ENCODE measurements at regions of chr6 and their contacts with region 1.

Region 1: GRCh38 chr6:30600451-30600961 is 16.5 kb downstream of the PPP1R10 start:
- DNase-seq: no peak
- ATAC-seq: no peak
- H3K4me3 ChIP-seq: no peak overlapping the region
- H3K27ac ChIP-seq: no peak overlapping the region
- H3K4me1 ChIP-seq: no peaks in the 10 kb centered on the region
- H3K27me3 ChIP-seq: no peaks in the 10 kb centered on the region
- CTCF ChIP-seq: no peak

Region 2: GRCh38 chr6:30396833-30397479 is 203.6 kb before region 1 on chr6:
- CTCF ChIA-PET with region 1: no interaction called
- POLR2A ChIA-PET with region 1: no interaction called
- intact Hi-C with region 1: no loop called
- DNase-seq: peak; percentile 83
- ATAC-seq: peak; percentile 85
- H3K4me3 ChIP-seq: no peak overlapping the region
- H3K27ac ChIP-seq: no peak overlapping the region
- H3K4me1 ChIP-seq: peaks cover 5% of the 10 kb centered on the region; the same call in 1 of the 2 replicates
- H3K27me3 ChIP-seq: peaks cover 30% of the 10 kb centered on the region
- CTCF ChIP-seq: peak; percentile 92

Region 3: GRCh38 chr6:30418448-30418847 is 182.1 kb before region 1 on chr6:
- CTCF ChIA-PET with region 1: no interaction called
- POLR2A ChIA-PET with region 1: no interaction called
- intact Hi-C with region 1: no loop called
- DNase-seq: no peak
- ATAC-seq: no peak
- H3K4me3 ChIP-seq: no peak overlapping the region
- H3K27ac ChIP-seq: no peak overlapping the region
- H3K4me1 ChIP-seq: no peaks in the 10 kb centered on the region
- H3K27me3 ChIP-seq: peaks cover 54% of the 10 kb centered on the region
- CTCF ChIP-seq: no peak

Region 4: GRCh38 chr6:30541515-30542403 is 58.7 kb before region 1 on chr6:
- CTCF ChIA-PET with region 1: interaction called, 19 read pairs
- POLR2A ChIA-PET with region 1: no interaction called
- intact Hi-C with region 1: loop called (anchors 1 kb)
- DNase-seq: peak; percentile 95
- ATAC-seq: peak; percentile 65
- H3K4me3 ChIP-seq: peak overlapping the region; percentile 68
- H3K27ac ChIP-seq: no peak overlapping the region
- H3K4me1 ChIP-seq: peaks cover 18% of the 10 kb centered on the region; the same call in 1 of the 2 replicates
- H3K27me3 ChIP-seq: no peaks in the 10 kb centered on the region
- CTCF ChIP-seq: peak; percentile 98

Region 5: GRCh38 chr6:30564114-30564513 is 36.4 kb before region 1 on chr6:
- CTCF ChIA-PET with region 1: interaction called, 10 read pairs
- POLR2A ChIA-PET with region 1: no interaction called
- intact Hi-C with region 1: no loop called
- DNase-seq: no peak
- ATAC-seq: no peak
- H3K4me3 ChIP-seq: no peak overlapping the region
- H3K27ac ChIP-seq: no peak overlapping the region
- H3K4me1 ChIP-seq: no peaks in the 10 kb centered on the region
- H3K27me3 ChIP-seq: no peaks in the 10 kb centered on the region
- CTCF ChIP-seq: no peak

Measured in PC-3 (cell line).